Breast epithelium (tissue), 4 donors: ENCODE measurements at regions of chr7 and their contacts with region 1.

Region 1: GRCh38 chr7:111855161-111855856 is 293.0 kb upstream of the IMMP2L start:
- DNase-seq: no peak
- H3K4me3 ChIP-seq: no peak overlapping the region
- H3K27ac ChIP-seq: no peak overlapping the region
- H3K4me1 ChIP-seq: no peaks in the 10 kb centered on the region
- H3K27me3 ChIP-seq: no peaks in the 10 kb centered on the region
- CTCF ChIP-seq: no peak
- POLR2A ChIP-seq: no peak

Region 2: GRCh38 chr7:111869280-111869679 is 14.0 kb after region 1 on chr7:
- intact Hi-C with region 1: loop called (anchors 1 kb)
- DNase-seq: no peak
- H3K4me3 ChIP-seq: no peak overlapping the region
- H3K27ac ChIP-seq: no peak overlapping the region
- H3K4me1 ChIP-seq: no peaks in the 10 kb centered on the region
- H3K27me3 ChIP-seq: no peaks in the 10 kb centered on the region
- CTCF ChIP-seq: no peak
- POLR2A ChIP-seq: no peak

Region 3: GRCh38 chr7:111919631-111920179 is 64.4 kb after region 1 on chr7:
- intact Hi-C with region 1: no loop called
- DNase-seq: no peak
- H3K4me3 ChIP-seq: no peak overlapping the region
- H3K27ac ChIP-seq: no peak overlapping the region
- H3K4me1 ChIP-seq: no peaks in the 10 kb centered on the region
- H3K27me3 ChIP-seq: no peaks in the 10 kb centered on the region
- CTCF ChIP-seq: no peak
- POLR2A ChIP-seq: no peak